ENCODE measurements at regions of chr4 and their contacts with region 1.

Region 1: GRCh38 chr4:189202182-189202868 is 738.3 kb upstream of the FRG1 start:
- DNase-seq: no peak
- ATAC-seq: peak; percentile 42
- H3K4me3 Mint-ChIP-seq: no peak overlapping the region
- H3K27ac Mint-ChIP-seq: no peak overlapping the region
- H3K4me1 Mint-ChIP-seq: peaks cover 2% of the 10 kb centered on the region
- H3K27me3 Mint-ChIP-seq: no peaks in the 10 kb centered on the region
- CTCF ChIP-seq: no peak

Region 2: DNA sequence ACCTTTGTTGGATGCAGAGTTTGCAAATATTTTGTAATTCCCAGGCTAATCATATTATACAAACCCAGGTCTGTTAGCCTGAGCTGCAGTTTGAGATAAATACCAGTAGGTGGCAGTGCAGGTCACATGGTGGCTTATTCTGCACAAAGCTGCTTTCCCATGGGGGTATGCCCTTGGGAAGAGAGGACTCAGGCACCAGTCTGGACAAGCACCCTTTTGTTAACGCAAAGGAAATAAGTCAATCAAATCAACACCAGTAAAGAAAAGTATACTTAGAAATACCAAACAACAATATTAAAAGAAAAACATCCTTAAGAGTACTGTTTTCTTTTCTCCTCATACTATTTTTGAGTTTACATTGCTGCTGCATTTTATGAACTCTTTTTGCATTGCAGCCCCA is 1595.7 kb before region 1 on chr4:
- CTCF ChIA-PET with region 1: no interaction called
- POLR2A ChIA-PET with region 1: no interaction called
- intact Hi-C with region 1: loop called (anchors 5 kb)
- DNase-seq: no peak
- ATAC-seq: no peak
- H3K4me3 Mint-ChIP-seq: no peak overlapping the region
- H3K27ac Mint-ChIP-seq: no peak overlapping the region
- H3K4me1 Mint-ChIP-seq: no peaks in the 10 kb centered on the region
- H3K27me3 Mint-ChIP-seq: no peaks in the 10 kb centered on the region
- CTCF ChIP-seq: no peak